Activated CD8-positive, alpha-beta T cell treated with anti-CD3 and anti-CD28 coated beads, Interleukin-2, amount 10 ng/mL, durations not matched to agents 7 days and 5 days (primary cell): ENCODE measurements at regions of chr13 and their contacts with region 1.

Region 1: GRCh38 chr13:45310341-45311125 is 30.4 kb downstream of the TPT1 start:
- DNase-seq: no peak
- ATAC-seq: no peak
- H3K4me3 Mint-ChIP-seq: peak overlapping the region; percentile 78
- H3K27ac Mint-ChIP-seq: peak overlapping the region; percentile 32
- H3K4me1 Mint-ChIP-seq: peaks cover 20% of the 10 kb centered on the region
- H3K27me3 Mint-ChIP-seq: peaks cover 6% of the 10 kb centered on the region

Region 2: GRCh38 chr13:45119991-45120864 is 190.3 kb before region 1 on chr13 and contains the start of gene GTF2F2:
- CTCF ChIA-PET with region 1: interaction called, 13 read pairs
- POLR2A ChIA-PET with region 1: no interaction called
- DNase-seq: peak; percentile 91
- ATAC-seq: peak; percentile 83
- H3K4me3 Mint-ChIP-seq: no peak within 1 kb of the TSS
- H3K27ac Mint-ChIP-seq: no peak within 1 kb of the TSS
- H3K4me1 Mint-ChIP-seq: peaks cover 8% of the 10 kb centered on the region
- H3K27me3 Mint-ChIP-seq: no peaks in the 10 kb centered on the region
- total RNA-seq, gene GTF2F2: 18.8 to 19.6 TPM

Region 3: GRCh38 chr13:45194081-45194939 is 116.2 kb before region 1 on chr13:
- CTCF ChIA-PET with region 1: no interaction called
- POLR2A ChIA-PET with region 1: no interaction called
- DNase-seq: no peak
- ATAC-seq: no peak
- H3K4me3 Mint-ChIP-seq: no peak overlapping the region
- H3K27ac Mint-ChIP-seq: no peak overlapping the region
- H3K4me1 Mint-ChIP-seq: peaks cover 9% of the 10 kb centered on the region
- H3K27me3 Mint-ChIP-seq: no peaks in the 10 kb centered on the region

Region 4: DNA sequence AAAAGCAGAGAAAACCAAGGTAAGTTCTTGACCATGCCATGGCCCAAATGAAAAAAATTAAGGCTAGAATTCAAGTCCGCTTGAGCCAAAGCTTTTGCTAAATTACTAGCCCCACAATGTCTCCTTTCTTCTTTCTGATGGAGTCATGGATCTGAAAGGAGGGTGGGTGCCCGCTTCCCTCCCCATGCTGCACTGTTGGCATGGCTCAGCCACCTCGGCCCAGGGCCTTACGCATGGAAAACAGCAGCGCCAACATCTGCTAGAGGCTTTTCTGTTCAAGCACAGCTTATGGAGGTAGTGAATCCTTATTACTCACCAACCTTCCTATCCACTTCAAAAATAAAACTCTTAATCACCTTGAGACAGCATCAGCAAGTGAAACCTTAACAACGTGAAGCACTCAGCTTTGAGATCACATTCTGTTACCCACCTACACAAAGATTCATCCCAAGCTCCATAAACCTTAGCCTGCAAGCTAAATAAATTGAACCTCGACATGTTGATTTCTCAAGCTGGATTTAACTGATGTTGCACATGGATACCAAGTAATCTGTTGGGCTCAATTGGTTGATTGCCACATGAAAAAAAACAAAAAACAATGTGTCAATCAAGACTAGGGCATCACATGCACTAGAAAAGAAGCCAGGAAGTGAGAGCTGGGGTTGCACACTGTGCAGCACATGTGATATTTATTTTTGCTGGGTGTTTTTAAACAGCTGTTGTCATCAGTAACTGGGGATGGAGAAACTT is 12.9 kb before region 1 on chr13:
- CTCF ChIA-PET with region 1: interaction called, 30 read pairs
- POLR2A ChIA-PET with region 1: no interaction called
- DNase-seq: peak; percentile 40
- ATAC-seq: peak; percentile 77
- H3K4me3 Mint-ChIP-seq: no peak overlapping the region
- H3K27ac Mint-ChIP-seq: peak overlapping the region; percentile 85
- H3K4me1 Mint-ChIP-seq: peaks cover 27% of the 10 kb centered on the region
- H3K27me3 Mint-ChIP-seq: peaks cover 2% of the 10 kb centered on the region

Region 5: DNA sequence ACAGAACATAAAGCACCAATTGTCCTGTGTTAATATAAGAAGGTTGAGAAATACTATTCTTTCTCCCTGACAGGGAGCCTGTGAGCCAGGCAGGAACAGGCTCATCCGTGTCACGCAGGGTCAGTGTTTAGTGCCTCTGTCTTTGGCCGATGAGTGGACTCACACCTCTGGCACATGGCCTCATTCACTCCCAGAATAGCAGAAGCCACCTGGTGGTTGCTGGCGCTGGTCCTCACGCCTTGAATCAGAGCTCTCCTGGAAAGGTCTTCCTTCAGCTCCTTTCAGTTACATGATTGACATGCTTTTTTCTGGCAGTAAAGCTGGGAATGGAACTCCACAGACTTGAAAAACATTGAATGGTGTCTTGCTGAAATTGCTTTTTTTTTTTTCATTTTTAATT is 569.1 kb after region 1 on chr13:
- CTCF ChIA-PET with region 1: no interaction called
- POLR2A ChIA-PET with region 1: no interaction called
- DNase-seq: no peak
- ATAC-seq: no peak
- H3K4me3 Mint-ChIP-seq: no peak overlapping the region
- H3K27ac Mint-ChIP-seq: no peak overlapping the region
- H3K4me1 Mint-ChIP-seq: no peaks in the 10 kb centered on the region
- H3K27me3 Mint-ChIP-seq: peaks cover 12% of the 10 kb centered on the region